Panc1 (cell line): ENCODE measurements at regions of chr2 and their contacts with region 1.

Region 1: GRCh38 chr2:54092940-54093339 is 22.5 kb upstream of the ACYP2 start:
- DNase-seq: no peak
- ATAC-seq: no peak
- H3K4me3 ChIP-seq: no peak overlapping the region
- H3K27ac ChIP-seq: no peak overlapping the region
- H3K4me1 ChIP-seq: no peaks in the 10 kb centered on the region
- H3K27me3 ChIP-seq: no peaks in the 10 kb centered on the region
- CTCF ChIP-seq: no peak

Region 2: DNA sequence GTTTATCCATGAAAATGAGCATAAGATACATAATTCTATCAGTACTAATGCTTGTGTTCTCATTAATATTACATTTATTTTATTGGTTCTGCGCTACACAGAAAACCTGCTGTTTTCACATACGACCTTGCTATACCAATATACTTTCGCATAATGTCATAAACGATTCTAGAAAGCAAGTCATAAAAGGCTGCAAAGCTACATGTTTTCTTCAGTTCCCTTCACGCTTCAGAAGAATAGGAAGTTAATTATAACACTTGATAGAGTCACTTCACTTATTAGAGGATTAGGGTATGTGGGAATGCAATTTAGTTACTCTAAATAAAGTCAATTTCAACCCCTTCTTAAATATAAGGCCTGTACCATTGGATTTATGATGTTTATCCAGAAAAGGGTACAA is 151.2 kb before region 1 on chr2:
- CTCF ChIA-PET with region 1: no interaction called
- POLR2A ChIA-PET with region 1: interaction called, 11 read pairs
- in situ Hi-C with region 1: no loop called
- intact Hi-C with region 1: no loop called
- DNase-seq: no peak
- ATAC-seq: no peak
- H3K4me3 ChIP-seq: no peak overlapping the region
- H3K27ac ChIP-seq: no peak overlapping the region
- H3K4me1 ChIP-seq: no peaks in the 10 kb centered on the region
- H3K27me3 ChIP-seq: no peaks in the 10 kb centered on the region
- CTCF ChIP-seq: no peak